CD8-positive, alpha-beta T cell (primary cell): ENCODE measurements at regions of chr19 and their contacts with region 1.

Region 1: DNA sequence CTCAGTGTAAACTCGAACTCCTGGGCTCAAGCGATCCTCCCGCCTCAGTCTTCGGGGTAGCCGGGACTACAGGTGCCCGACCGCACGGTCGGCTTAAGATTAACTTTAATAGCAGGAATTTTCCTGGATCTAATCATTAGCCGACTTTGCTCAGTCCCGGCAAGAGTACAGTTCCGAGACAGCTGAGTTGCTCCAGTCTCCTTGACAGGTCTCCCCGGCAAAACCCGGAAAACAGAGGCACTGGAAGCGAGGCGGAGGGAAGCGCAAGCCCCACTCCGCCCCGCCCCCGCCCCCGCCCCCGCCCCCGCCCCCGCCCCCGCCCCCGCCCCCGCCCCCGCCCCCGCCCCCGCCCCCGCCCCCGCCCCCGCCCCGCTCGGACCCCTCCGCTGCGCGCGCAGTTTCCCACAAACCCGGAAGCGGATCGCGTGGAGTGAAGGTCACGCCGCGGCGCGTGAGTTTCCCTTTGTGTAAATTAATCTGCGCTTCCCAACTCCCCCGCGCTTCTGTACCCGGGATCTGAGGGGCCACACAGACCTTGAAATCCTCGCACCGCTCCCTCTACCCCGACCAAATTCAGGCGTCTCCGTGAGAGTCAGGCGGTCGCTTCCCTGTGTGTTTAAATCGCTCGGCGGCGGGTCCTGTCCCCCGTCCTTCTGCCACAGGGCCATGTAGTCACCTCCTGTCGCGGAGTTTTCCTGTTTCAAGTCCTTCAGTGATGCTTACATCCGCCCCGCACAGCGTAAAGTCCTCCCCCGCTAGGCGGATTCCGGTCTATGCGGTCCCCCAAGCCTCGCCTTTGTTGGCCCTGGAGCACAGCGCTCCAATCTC is at the start of gene ZNF480:
- DNase-seq: peak; percentile 73 to 94 (median 89)
- ATAC-seq: peak; percentile 92
- H3K4me3 ChIP-seq: peak within 1 kb of the TSS; percentile 96 to 97
- H3K4me3 Mint-ChIP-seq: peak within 1 kb of the TSS; percentile 97
- H3K27ac ChIP-seq: peak within 1 kb of the TSS; percentile 93 to 98
- H3K27ac Mint-ChIP-seq: peak within 1 kb of the TSS; percentile 99
- H3K4me1 ChIP-seq: peaks cover 7% of the 10 kb centered on the region
- H3K4me1 Mint-ChIP-seq: peaks cover 20% of the 10 kb centered on the region
- H3K27me3 ChIP-seq: no peaks in the 10 kb centered on the region
- H3K27me3 Mint-ChIP-seq: no peaks in the 10 kb centered on the region
- CTCF ChIP-seq: no peak
- total RNA-seq, gene ZNF480: 7.8 to 9.1 TPM

Region 2: GRCh38 chr19:52269338-52270261 is 27.4 kb before region 1 on chr19 and contains the start of gene ZNF766:
- CTCF ChIA-PET with region 1: interaction called, 3 read pairs
- POLR2A ChIA-PET with region 1: no interaction called
- intact Hi-C with region 1: loop called (anchors 1 kb)
- DNase-seq: peak; percentile 95 to 98 (median 97)
- ATAC-seq: peak; percentile 98
- H3K4me3 ChIP-seq: peak within 1 kb of the TSS; percentile 89 to 95
- H3K4me3 Mint-ChIP-seq: peak within 1 kb of the TSS; percentile 98
- H3K27ac ChIP-seq: peak within 1 kb of the TSS; percentile 96
- H3K27ac Mint-ChIP-seq: peak within 1 kb of the TSS; percentile 98
- H3K4me1 ChIP-seq: peaks cover 13% of the 10 kb centered on the region
- H3K4me1 Mint-ChIP-seq: peaks cover 41% of the 10 kb centered on the region
- H3K27me3 ChIP-seq: no peaks in the 10 kb centered on the region
- H3K27me3 Mint-ChIP-seq: no peaks in the 10 kb centered on the region
- CTCF ChIP-seq: no peak
- total RNA-seq, gene ZNF766: 50.8 to 52.6 TPM

Region 3: GRCh38 chr19:52336117-52336790 is 39.3 kb after region 1 on chr19 and contains the start of gene ZNF610:
- CTCF ChIA-PET with region 1: no interaction called
- POLR2A ChIA-PET with region 1: interaction called, 3 read pairs
- intact Hi-C with region 1: loop called in 1 of 2 experiments (anchors 2 kb)
- DNase-seq: peak; percentile 71 to 91 (median 84)
- ATAC-seq: peak; percentile 96
- H3K4me3 ChIP-seq: peak within 1 kb of the TSS; percentile 70 to 87
- H3K4me3 Mint-ChIP-seq: peak within 1 kb of the TSS; percentile 98
- H3K27ac ChIP-seq: peak within 1 kb of the TSS; percentile 80 to 85
- H3K27ac Mint-ChIP-seq: peak within 1 kb of the TSS; percentile 99
- H3K4me1 ChIP-seq: peaks cover 6% of the 10 kb centered on the region
- H3K4me1 Mint-ChIP-seq: peaks cover 14% of the 10 kb centered on the region
- H3K27me3 ChIP-seq: no peaks in the 10 kb centered on the region
- H3K27me3 Mint-ChIP-seq: no peaks in the 10 kb centered on the region
- CTCF ChIP-seq: no peak
- total RNA-seq, gene ZNF610: 0.33 TPM

Region 4: DNA sequence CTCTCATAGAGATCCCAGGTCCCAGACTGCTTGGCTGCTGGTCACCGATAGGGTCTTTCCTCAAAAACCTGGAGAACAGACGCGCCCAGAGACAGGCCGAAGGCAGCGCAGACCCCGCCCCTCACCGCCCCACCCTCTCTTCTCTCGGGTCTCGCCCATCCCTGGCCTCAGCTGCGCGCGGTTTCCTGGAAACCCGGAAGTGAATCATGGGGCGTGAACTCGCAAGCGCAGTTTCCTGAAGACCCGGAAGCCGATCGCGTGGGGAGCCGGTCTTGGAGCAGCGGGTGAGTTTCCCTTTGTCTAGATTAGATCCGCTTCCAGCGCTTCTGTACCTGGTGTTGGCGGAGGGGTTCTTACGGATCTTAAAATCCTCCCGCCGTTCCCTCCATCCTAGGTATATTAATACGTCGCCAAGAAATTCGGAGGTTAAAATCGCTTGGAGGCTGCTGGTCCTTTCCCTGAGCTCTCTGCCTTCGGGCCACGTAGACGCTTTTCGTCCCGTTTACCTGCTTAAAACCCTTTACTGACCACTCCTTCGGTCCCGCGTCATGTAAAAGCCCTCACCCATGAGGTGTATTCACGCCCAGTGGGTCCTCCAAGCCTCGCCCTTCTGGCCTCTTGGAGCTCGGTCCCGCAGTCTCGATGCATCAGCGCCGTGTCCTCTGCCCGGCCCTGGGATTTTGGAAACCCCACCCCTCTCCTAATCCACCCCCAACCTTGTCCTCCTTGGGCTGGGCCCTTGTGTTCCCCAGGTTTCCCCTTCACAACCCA is 156.5 kb after region 1 on chr19 and contains the start of gene ZNF578:
- CTCF ChIA-PET with region 1: no interaction called
- POLR2A ChIA-PET with region 1: no interaction called
- intact Hi-C with region 1: no loop called
- DNase-seq: peak; percentile 22 to 77 (median 65)
- ATAC-seq: peak; percentile 88
- H3K4me3 ChIP-seq: peak within 1 kb of the TSS; percentile 44 to 59
- H3K4me3 Mint-ChIP-seq: peak within 1 kb of the TSS; percentile 87
- H3K27ac ChIP-seq: peak within 1 kb of the TSS in 1 of 2 experiments; percentile 38
- H3K27ac Mint-ChIP-seq: peak within 1 kb of the TSS; percentile 82
- H3K4me1 ChIP-seq: no peaks in the 10 kb centered on the region
- H3K4me1 Mint-ChIP-seq: peaks cover 16% of the 10 kb centered on the region
- H3K27me3 ChIP-seq: peaks cover 0 to 2% of the 10 kb centered on the region in 2 experiments
- H3K27me3 Mint-ChIP-seq: peaks cover 8% of the 10 kb centered on the region
- CTCF ChIP-seq: no peak
- total RNA-seq, gene ZNF578: 1.5 to 1.8 TPM

Region 5: GRCh38 chr19:52570000-52570861 is 273.2 kb after region 1 on chr19 and contains the start of gene ZNF701:
- CTCF ChIA-PET with region 1: no interaction called
- POLR2A ChIA-PET with region 1: no interaction called
- intact Hi-C with region 1: loop called (anchors 1 kb)
- DNase-seq: peak; percentile 93 to 97 (median 95)
- ATAC-seq: peak; percentile 98
- H3K4me3 ChIP-seq: peak within 1 kb of the TSS; percentile 81 to 96
- H3K4me3 Mint-ChIP-seq: peak within 1 kb of the TSS; percentile 90
- H3K27ac ChIP-seq: peak within 1 kb of the TSS; percentile 77 to 91
- H3K27ac Mint-ChIP-seq: peak within 1 kb of the TSS; percentile 93
- H3K4me1 ChIP-seq: peaks cover 12% of the 10 kb centered on the region
- H3K4me1 Mint-ChIP-seq: peaks cover 42% of the 10 kb centered on the region
- H3K27me3 ChIP-seq: no peaks in the 10 kb centered on the region
- H3K27me3 Mint-ChIP-seq: no peaks in the 10 kb centered on the region
- CTCF ChIP-seq: peak; percentile 30
- total RNA-seq, gene ZNF701: 11.2 to 11.9 TPM

Region 6: DNA sequence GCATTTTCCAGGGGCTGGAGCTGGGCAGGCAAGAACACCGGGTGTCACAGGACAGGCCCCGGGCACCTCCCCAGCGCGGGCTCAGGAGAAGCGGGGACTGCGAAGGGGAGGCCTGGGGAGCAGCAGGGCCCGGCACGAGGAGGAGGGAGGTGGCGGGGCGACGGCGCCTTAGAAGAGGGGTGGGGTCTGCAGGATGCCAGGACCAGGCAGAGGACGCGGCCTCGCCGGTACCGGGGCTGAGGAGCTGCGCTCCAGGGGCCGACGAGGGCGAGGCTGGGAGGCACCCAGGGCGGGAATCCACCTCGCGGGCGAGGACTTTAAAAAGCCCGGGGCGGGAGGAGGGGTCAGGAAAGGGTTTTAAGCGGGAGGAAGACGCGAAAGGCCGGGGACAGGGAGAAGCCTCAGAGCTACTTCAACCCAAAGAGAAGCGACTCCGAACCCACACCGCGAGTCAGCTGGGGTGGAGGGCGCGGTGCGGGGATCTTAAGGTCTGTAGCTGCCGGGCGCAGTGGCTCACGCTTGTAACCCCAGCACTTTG is 861.2 kb after region 1 on chr19:
- CTCF ChIA-PET with region 1: no interaction called
- POLR2A ChIA-PET with region 1: no interaction called
- intact Hi-C with region 1: loop called in 1 of 2 experiments (anchors 5 kb)
- DNase-seq: peak in 7 of 9 experiments; percentile 4 to 63 (median 47)
- ATAC-seq: peak; percentile 42
- H3K4me3 ChIP-seq: peak overlapping the region; percentile 59 to 60
- H3K4me3 Mint-ChIP-seq: peak overlapping the region; percentile 77
- H3K27ac ChIP-seq: peak overlapping the region; percentile 44 to 52
- H3K27ac Mint-ChIP-seq: peak overlapping the region; percentile 79
- H3K4me1 ChIP-seq: peaks cover 13% of the 10 kb centered on the region
- H3K4me1 Mint-ChIP-seq: peaks cover 23% of the 10 kb centered on the region
- H3K27me3 ChIP-seq: no peaks in the 10 kb centered on the region
- H3K27me3 Mint-ChIP-seq: no peaks in the 10 kb centered on the region
- CTCF ChIP-seq: no peak